Left cardiac atrium (tissue), 4 donors: ENCODE measurements at regions of chr15 and their contacts with region 1.

Region 1: DNA sequence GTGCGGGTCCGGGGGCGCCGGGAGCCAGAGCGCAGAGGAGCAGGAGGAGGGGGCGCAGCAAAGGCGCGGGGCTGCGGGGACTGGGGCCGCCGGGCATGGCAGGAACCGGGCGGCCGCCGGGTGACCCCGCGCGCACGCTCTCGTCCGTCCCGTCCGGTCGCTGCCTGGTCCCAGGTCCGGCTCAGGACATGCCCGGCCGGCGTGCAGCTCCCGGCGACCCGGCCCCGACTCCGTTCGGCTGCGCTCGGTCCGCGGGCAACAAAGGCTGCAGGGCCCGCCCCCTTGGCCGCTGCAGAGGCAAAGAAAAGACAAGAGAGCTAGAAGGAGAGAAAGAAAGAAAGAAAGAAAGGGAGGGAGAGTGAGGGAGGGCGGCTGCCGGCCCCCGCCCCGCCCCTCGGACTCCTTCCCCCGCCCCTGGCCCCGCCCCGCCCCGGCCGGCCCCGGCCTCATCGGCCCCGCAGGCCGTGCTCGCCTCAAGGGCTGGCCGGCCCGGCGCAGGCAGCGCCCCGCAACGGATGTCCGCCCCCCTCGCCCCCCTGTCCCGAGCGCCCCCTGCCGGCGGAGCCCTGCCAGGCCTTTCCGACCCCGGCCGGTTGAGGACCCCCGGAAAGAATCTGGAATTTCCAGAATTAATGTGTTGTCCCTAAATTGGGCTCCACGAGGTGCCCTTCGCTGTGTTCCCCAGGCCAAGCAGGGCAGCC is at the start of gene ADAMTS7:
- DNase-seq: peak; percentile 83
- ATAC-seq: peak; percentile 88 to 91
- total RNA-seq, gene ADAMTS7: 35.8 to 45.9 TPM

Region 2: DNA sequence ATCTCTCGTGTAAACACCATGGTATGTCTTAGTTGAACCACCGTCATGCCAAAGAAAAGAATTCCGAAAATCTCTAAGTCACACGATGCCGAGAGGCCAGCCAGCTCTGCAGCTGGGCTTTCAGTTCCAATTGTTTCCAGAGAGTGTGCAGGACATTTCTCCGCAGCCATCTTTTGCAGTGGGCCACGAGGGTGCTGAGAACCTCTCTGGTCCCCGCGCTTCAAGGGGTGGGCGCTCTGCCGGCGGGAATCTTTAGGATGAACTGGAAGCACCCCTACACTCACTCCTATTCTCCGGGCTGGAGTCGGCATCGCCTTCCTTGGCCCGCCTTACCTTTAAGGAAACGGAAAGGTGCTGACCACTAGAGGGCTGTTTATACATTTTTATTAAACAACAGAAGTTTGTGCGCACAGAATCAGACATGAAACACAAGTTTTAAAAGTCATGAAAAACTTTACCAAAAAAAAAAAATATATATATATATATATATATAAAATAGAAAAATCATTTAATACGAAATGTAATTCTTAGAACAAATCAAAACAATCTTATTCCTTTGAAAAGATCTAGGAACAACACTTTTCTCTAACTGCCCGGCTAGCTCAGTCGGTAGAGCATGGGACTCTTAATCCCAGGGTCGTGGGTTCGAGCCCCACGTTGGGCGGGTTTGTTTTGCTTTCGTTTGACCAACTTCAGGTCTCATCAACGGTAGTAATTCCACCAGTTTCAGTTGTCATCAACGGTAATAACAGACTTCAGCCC is 48.9 kb after region 1 on chr15:
- intact Hi-C with region 1: loop called in 1 of 2 experiments (anchors 5 kb)
- DNase-seq: peak; percentile 72
- ATAC-seq: peak; percentile 80 to 95